ENCODE measurements at regions of chr9 and their contacts with region 1.

Region 1: DNA sequence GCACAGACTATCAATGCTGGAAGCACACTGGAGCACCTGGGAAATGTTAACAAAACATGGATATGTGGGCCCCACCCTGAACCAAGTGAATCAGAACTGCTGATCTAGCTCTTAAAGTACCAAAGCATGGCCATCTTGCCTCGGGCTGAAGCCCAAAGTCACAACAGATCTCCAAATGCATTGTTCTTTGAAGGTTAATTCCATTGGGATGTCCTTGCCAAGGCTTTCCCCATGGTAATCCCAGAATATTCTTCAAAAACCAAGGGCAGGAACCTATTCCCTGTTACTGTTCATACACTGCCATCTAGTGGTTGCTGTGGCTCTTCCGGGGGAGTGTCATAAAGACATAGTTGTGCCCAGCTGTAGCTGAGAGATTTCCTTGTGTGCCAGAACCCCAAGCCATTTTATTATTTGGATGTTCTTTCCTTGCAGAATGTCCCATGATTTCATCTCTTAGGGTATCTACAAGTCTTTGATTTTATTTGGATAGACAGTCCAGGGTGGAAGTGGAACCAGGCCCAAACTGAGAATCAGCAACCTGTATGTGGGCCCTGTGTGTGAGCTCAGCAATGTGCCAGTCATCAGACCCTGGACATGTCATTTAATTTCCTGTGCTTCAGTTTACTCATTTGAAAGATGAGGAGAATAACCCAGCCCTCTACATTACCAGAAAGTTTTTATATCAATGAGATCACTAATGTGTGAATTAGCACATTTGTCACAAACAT is 290.0 kb downstream of the ACTL7B start:
- DNase-seq: peak; percentile 3
- ATAC-seq: peak; percentile 93
- H3K4me3 ChIP-seq: no peak overlapping the region
- H3K27ac ChIP-seq: no peak overlapping the region
- H3K4me1 ChIP-seq: no peaks in the 10 kb centered on the region
- H3K27me3 ChIP-seq: no peaks in the 10 kb centered on the region; a peak in 1 of 4 replicates
- CTCF ChIP-seq: peak; percentile 75 to 86 (median 80)
- EP300 ChIP-seq: no peak
- POLR2A ChIP-seq: no peak
- RAD21 ChIP-seq: peak; percentile 89

Region 2: GRCh38 chr9:107465467-107466451 is 1100.1 kb before region 1 on chr9:
- CTCF ChIA-PET with region 1: interaction called, 20 read pairs
- POLR2A ChIA-PET with region 1: no interaction called
- RAD21 ChIA-PET with region 1: interaction called, 7 read pairs
- SMC1A ChIA-PET with region 1: interaction called, 3 read pairs
- in situ Hi-C with region 1: no loop called
- intact Hi-C with region 1: loop called (anchors 5 kb)
- DNase-seq: no peak
- ATAC-seq: peak; percentile 97
- H3K4me3 ChIP-seq: no peak overlapping the region
- H3K27ac ChIP-seq: no peak overlapping the region
- H3K4me1 ChIP-seq: no peaks in the 10 kb centered on the region
- H3K27me3 ChIP-seq: peaks cover 7 to 21% of the 10 kb centered on the region in 2 experiments
- CTCF ChIP-seq: peak; percentile 44 to 59 (median 52); a peak in 5 of 6 replicates
- EP300 ChIP-seq: no peak
- POLR2A ChIP-seq: no peak
- RAD21 ChIP-seq: peak; percentile 50; the same call in 1 of the 2 replicates

Region 3: GRCh38 chr9:107489687-107490605 is 1075.9 kb before region 1 on chr9 and contains the start of gene KLF4:
- CTCF ChIA-PET with region 1: no interaction called
- POLR2A ChIA-PET with region 1: no interaction called
- RAD21 ChIA-PET with region 1: no interaction called
- SMC1A ChIA-PET with region 1: no interaction called
- in situ Hi-C with region 1: loop called (anchors 5 kb)
- intact Hi-C with region 1: no loop called
- DNase-seq: no peak
- ATAC-seq: peak; percentile 88
- H3K4me3 ChIP-seq: peak within 1 kb of the TSS; percentile 57; the same call in 1 of the 2 replicates
- H3K27ac ChIP-seq: no peak within 1 kb of the TSS
- H3K4me1 ChIP-seq: peaks cover 2% of the 10 kb centered on the region; the same call in 1 of the 2 replicates
- H3K27me3 ChIP-seq: peaks cover 8 to 25% of the 10 kb centered on the region in 2 experiments
- CTCF ChIP-seq: no peak
- EP300 ChIP-seq: no peak
- POLR2A ChIP-seq: no peak
- RAD21 ChIP-seq: no peak
- polyA plus RNA-seq, gene KLF4: 0.05 TPM in 1 of 2 experiments, not detected in the other

Region 4: DNA sequence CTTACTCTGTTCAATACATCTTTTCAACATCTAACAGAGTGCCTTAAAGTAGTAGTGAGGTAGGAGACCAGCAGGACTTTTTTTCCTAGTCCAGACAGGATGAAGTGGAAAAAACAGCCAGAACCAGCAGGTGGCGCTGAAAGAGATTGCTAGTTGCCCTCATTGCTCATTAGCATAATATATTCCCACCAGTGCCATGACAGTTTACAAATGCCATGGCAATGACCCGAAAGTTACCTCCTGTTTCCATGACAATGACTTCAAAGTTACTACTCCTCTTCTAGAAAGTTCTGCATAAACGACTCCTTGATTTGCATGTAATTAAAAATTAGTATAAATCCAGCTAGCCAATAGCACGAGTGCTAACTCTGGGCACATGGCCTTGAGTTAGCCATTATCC is 97.4 kb before region 1 on chr9:
- CTCF ChIA-PET with region 1: interaction called, 16 read pairs
- POLR2A ChIA-PET with region 1: no interaction called
- RAD21 ChIA-PET with region 1: interaction called, 4 read pairs
- SMC1A ChIA-PET with region 1: interaction called, 3 read pairs
- in situ Hi-C with region 1: no loop called
- intact Hi-C with region 1: loop called (anchors 5 kb)
- DNase-seq: no peak
- ATAC-seq: peak; percentile 76
- H3K4me3 ChIP-seq: no peak overlapping the region
- H3K27ac ChIP-seq: no peak overlapping the region
- H3K4me1 ChIP-seq: no peaks in the 10 kb centered on the region
- H3K27me3 ChIP-seq: no peaks in the 10 kb centered on the region
- CTCF ChIP-seq: peak; percentile 40 to 44 (median 42)
- EP300 ChIP-seq: no peak
- POLR2A ChIP-seq: no peak
- RAD21 ChIP-seq: peak; percentile 35; the same call in 1 of the 2 replicates

Region 5: GRCh38 chr9:108761655-108762347 is 196.0 kb after region 1 on chr9:
- CTCF ChIA-PET with region 1: interaction called, 6 read pairs
- POLR2A ChIA-PET with region 1: no interaction called
- RAD21 ChIA-PET with region 1: interaction called, 6 read pairs
- SMC1A ChIA-PET with region 1: interaction called, 4 read pairs
- in situ Hi-C with region 1: no loop called
- intact Hi-C with region 1: loop called (anchors 5 kb)
- DNase-seq: no peak
- ATAC-seq: peak; percentile 87
- H3K4me3 ChIP-seq: no peak overlapping the region
- H3K27ac ChIP-seq: no peak overlapping the region
- H3K4me1 ChIP-seq: peaks cover under 1% of the 10 kb centered on the region; the same call in 1 of the 2 replicates
- H3K27me3 ChIP-seq: no peaks in the 10 kb centered on the region
- CTCF ChIP-seq: peak; percentile 79 to 83 (median 82)
- EP300 ChIP-seq: no peak
- POLR2A ChIP-seq: no peak
- RAD21 ChIP-seq: peak; percentile 82